CD14-positive monocyte (primary cell): ENCODE measurements at regions of chr3 and their contacts with region 1.

Region 1: GRCh38 chr3:105366326-105367062 is at the start of gene ALCAM:
- DNase-seq: peak; percentile 88 to 90 (median 88)
- H3K4me3 ChIP-seq: peak within 1 kb of the TSS; percentile 55 to 79 (median 73)
- H3K4me3 Mint-ChIP-seq: peak within 1 kb of the TSS; percentile 92 to 97
- H3K27ac ChIP-seq: peak within 1 kb of the TSS; percentile 96 to 98
- H3K27ac Mint-ChIP-seq: peak within 1 kb of the TSS; percentile 98 to 100 (median 99)
- H3K4me1 ChIP-seq: peaks cover 28 to 42% of the 10 kb centered on the region in 2 donors
- H3K4me1 Mint-ChIP-seq: peaks cover 34% of the 10 kb centered on the region
- H3K27me3 ChIP-seq: no peaks in the 10 kb centered on the region
- H3K27me3 Mint-ChIP-seq: peaks cover 0 to 12% (median 11%) of the 10 kb centered on the region in 3 donors
- CTCF ChIP-seq: peak; percentile 41
- polyA plus RNA-seq, gene ALCAM: 7.1 to 8.0 (median 7.9) TPM

Region 2: GRCh38 chr3:105317841-105318240 is 48.7 kb before region 1 on chr3:
- intact Hi-C with region 1: loop called in 1 of 2 experiments (anchors 10 kb)
- DNase-seq: no peak
- H3K4me3 ChIP-seq: no peak overlapping the region
- H3K4me3 Mint-ChIP-seq: no peak overlapping the region
- H3K27ac ChIP-seq: no peak overlapping the region
- H3K27ac Mint-ChIP-seq: no peak overlapping the region
- H3K4me1 ChIP-seq: no peaks in the 10 kb centered on the region
- H3K4me1 Mint-ChIP-seq: peaks cover 3% of the 10 kb centered on the region
- H3K27me3 ChIP-seq: no peaks in the 10 kb centered on the region
- H3K27me3 Mint-ChIP-seq: no peaks in the 10 kb centered on the region
- CTCF ChIP-seq: no peak

Region 3: DNA sequence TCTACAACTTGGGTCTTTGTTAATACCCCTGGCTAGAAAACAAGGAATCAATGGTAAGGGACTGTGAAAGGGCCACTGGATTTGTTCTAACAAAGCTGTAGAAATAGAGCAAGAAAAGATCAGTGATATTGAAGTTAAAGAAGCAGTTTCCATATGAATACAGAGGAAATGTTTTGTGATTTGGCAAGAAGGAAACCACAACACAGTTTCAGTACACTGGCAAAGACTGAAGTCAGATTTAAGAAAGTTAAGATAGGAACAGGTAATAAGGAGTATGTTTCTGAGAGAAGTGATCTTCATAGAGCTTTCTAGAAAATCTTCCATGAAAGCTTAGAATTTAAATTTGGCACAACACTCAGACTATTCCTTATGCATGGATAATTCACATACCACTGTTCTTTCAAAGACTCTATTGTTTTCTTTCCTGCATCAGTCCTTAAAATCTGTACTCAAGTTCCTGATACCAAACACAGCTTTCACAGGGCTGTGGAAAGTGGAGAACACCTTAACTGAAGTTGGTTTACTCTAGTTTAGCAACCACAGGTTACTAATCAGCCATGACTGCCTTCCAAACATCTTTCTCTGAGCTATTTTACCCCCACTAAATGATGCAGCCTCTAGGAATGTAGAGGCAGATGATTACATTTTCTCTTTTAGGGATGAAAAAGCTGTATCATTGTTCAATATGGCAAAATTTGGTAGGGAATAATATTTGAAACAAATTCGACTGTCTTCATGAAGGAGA is 32.2 kb before region 1 on chr3:
- intact Hi-C with region 1: loop called in 1 of 2 experiments (anchors 5 kb)
- DNase-seq: no peak
- H3K4me3 ChIP-seq: no peak overlapping the region
- H3K4me3 Mint-ChIP-seq: peak overlapping the region in 1 of 2 donors; percentile 26
- H3K27ac ChIP-seq: no peak overlapping the region
- H3K27ac Mint-ChIP-seq: peak overlapping the region in 5 of 7 donors; percentile 12 to 79 (median 54)
- H3K4me1 ChIP-seq: peaks cover 10 to 31% of the 10 kb centered on the region in 2 donors
- H3K4me1 Mint-ChIP-seq: peaks cover 23% of the 10 kb centered on the region
- H3K27me3 ChIP-seq: no peaks in the 10 kb centered on the region
- H3K27me3 Mint-ChIP-seq: no peaks in the 10 kb centered on the region
- CTCF ChIP-seq: no peak